Posterior vena cava (tissue), 2 donors: ENCODE measurements at regions of chr9 and their contacts with region 1.

Region 1: GRCh38 chr9:71819115-71819739 is 50.9 kb upstream of the CEMIP2 start:
- DNase-seq: no peak

Region 2: GRCh38 chr9:71975833-71976232 is 156.6 kb after region 1 on chr9:
- intact Hi-C with region 1: loop called in 1 of 2 experiments (anchors 10 kb)
- DNase-seq: no peak